ENCODE measurements at regions of chr19 and their contacts with region 1.

Region 1: GRCh38 chr19:5827891-5828660 is 11.4 kb downstream of the FUT6 start:
- DNase-seq: peak; percentile 95
- H3K4me3 ChIP-seq: peak overlapping the region; percentile 72
- H3K27ac ChIP-seq: peak overlapping the region; percentile 91
- H3K4me1 ChIP-seq: peaks cover 37% of the 10 kb centered on the region
- CTCF ChIP-seq: no peak

Region 2: DNA sequence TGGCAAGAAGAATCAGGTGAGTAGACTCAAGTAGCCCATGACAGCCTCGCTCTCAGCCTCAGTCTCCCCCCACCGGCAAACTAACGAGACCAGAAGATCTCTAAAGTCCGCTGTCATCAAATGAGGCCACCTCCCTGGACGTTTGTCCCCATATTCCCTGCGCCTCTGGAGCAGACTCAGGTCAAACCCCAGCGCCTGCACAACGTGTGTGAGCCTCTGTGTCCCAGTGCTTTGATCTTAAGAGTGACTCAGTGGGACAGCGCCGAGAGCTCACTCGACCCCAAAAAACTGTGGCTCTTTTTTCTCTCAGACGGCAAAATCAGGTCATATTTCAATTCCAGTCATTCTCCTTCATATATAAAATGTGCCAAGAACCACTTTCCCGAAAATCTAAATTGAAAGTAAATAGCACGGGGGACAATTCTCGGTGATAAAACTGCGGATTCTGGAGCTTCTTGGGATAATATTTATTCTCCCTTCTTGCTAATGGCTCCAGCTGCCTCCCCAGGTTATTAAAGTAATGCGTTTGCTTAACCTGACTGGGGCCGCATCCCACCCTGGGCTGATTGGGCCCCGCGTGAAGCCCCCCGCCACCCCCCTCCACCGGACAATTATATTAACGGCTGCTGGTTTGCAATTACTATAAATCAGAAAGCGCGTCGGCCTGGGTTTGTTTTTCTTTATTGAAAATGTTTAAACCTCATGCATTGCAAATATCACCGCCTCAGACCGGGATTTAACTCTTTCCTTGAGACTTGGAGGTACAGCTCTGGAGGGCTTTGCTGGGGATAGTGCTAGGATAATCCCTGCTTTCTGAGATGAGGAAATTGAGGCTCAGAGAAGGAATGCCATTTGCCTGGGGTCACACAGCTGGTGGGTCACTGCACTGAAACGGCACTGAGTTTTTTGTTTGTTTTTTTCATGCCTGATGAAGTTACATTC is 410.3 kb before region 1 on chr19:
- CTCF ChIA-PET with region 1: no interaction called
- POLR2A ChIA-PET with region 1: no interaction called
- intact Hi-C with region 1: no loop called
- DNase-seq: no peak
- H3K4me3 ChIP-seq: no peak overlapping the region
- H3K27ac ChIP-seq: no peak overlapping the region
- H3K4me1 ChIP-seq: no peaks in the 10 kb centered on the region
- CTCF ChIP-seq: no peak

Region 3: GRCh38 chr19:5953680-5954213 is 125.7 kb after region 1 on chr19:
- CTCF ChIA-PET with region 1: no interaction called
- POLR2A ChIA-PET with region 1: interaction called, 3 read pairs
- intact Hi-C with region 1: loop called (anchors 1 kb)
- DNase-seq: no peak
- H3K4me3 ChIP-seq: no peak overlapping the region
- H3K27ac ChIP-seq: peak overlapping the region; percentile 96
- H3K4me1 ChIP-seq: peaks cover 81% of the 10 kb centered on the region
- CTCF ChIP-seq: no peak

Measured in OCI-LY7 (cell line).